Kidney (tissue), 22 donors: ENCODE measurements at regions of chr1 and their contacts with region 1.

Region 1: DNA sequence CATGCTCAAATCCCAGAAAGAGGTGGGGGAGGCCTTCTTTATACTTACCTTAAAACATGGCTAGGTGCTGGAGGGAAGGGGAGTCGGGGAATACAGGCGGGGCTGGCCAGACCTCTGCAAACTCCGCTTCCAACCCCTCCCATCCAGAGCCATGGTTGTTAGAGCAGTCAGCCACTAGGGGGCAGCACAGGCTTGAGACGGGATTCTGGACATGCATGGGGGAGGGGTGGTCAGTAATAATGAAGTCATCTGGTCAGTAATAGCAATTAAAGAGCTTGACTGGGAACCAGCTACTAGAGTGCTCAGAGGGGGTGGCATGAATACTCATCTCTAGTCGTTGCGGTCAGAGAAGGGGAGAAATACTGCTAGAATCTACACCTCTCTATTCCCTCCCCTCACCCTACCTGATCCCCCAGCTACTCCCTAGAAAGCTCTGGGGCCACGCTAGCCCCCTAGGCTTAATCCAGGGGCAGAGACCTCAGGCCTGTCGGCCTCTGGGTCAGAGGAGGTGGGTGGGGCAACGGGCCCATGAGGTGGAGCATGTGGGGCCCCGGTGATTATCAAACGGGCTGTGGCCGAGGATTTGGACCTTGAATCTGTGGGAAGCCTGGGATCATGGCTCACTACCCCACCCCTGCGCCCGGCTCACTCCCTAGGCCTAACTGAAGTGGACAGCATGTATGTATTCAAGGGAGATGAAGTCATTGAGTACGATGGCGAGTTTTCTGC is 2.9 kb downstream of the CASQ1 start:
- DNase-seq: peak; percentile 91 to 95 (median 93)
- H3K4me3 ChIP-seq: peak overlapping the region in 1 of 3 donors; percentile 9
- H3K27ac ChIP-seq: no peak overlapping the region
- H3K4me1 ChIP-seq: peaks cover 2 to 5% (median 3%) of the 10 kb centered on the region in 3 donors
- H3K27me3 ChIP-seq: peaks cover 4% of the 10 kb centered on the region
- CTCF ChIP-seq: peak; percentile 99

Region 2: DNA sequence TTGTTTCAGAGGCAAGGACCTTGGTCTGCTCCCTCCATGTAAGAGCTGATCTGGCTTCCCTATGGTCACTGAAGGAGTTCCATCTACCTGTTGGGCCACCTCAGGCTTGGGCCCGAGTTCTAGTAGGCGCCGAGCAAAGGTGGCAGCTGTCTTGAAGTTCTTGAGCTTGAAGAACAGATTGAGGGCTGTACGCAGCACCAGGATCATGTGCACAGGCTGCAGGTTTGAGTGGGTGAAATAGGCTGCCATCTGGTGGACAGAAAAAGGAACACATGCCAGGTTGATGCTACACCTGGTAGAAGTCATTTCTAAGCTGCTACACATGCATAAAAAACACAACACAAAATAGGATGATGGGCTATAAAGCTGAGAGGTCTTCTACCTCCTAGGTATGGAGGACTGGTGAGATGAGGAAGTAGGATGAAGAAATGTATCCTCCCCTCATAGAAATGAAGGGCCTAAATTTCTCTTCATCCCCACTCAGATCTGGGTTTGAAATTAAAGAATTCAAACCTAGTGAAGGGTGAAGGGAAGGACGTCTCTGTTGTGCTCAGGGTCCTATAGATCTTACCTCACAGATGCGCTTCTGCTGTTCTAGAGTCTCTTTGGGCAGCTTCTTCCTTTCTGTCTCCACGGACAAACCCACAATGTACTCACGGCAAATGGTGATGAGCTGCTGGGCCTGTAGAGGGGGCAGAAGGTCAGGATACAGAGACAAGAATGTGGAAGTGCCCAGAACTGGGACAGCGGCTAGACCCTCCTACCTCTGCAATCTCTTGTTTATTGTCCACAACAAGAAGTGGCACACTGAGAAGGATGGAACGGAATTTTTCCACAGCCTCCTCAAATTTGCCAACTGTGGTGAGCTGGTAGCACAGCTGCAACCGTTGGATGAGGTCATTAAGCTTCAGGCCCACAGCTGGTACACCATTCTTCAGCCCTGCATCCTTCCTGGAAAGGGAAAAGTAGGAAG is 98.3 kb after region 1 on chr1:
- intact Hi-C with region 1: loop called (anchors 10 kb)
- DNase-seq: peak; percentile 61 to 84 (median 76)
- H3K4me3 ChIP-seq: no peak overlapping the region
- H3K27ac ChIP-seq: no peak overlapping the region
- H3K4me1 ChIP-seq: no peaks in the 10 kb centered on the region
- H3K27me3 ChIP-seq: no peaks in the 10 kb centered on the region
- CTCF ChIP-seq: peak; percentile 84